Gastrocnemius medialis (tissue), 4 donors: ENCODE measurements at regions of chr5 and their contacts with region 1.

Region 1: DNA sequence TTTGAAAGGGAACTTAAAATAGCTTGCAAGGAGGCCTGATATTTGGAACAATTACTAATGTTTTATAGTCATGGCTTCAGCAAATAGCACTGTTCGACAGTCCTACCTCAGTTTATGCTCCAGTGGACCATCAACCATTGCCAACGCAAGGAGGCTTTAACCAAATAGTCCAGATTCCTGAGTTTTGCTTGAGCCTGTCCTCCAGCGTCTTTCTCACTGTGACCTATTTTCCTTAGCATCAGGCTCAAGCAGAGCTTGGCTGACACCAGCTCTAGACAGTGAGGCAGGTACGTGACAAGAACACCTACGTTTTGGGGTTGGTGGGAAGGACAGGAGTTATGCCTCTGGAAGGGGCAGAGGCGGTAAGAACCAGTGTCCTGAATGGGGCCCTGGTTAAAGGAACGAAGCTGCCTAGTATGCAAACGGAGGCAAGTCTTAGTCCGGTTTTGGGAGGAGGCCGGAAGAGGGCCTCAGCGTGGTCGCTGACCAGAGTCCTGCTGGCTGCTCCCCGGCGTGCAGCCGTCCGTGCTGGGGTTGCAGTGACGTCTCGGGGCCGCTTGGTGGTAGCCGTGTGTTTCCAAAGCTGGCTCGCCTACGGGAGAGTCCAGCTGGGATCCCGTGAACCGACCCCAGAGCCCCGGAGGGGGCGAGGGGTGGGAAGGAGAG is 998 bp upstream of the FGF18 start:
- DNase-seq: peak; percentile 37 to 63
- ATAC-seq: peak; percentile 71 to 83
- H3K4me3 ChIP-seq: peak overlapping the region; percentile 39 to 51 (median 46)
- H3K27ac ChIP-seq: no peak overlapping the region
- H3K4me1 ChIP-seq: peaks cover 20 to 21% of the 10 kb centered on the region in 2 donors
- H3K27me3 ChIP-seq: peaks cover 0 to 6% (median 0%) of the 10 kb centered on the region in 3 donors
- CTCF ChIP-seq: peak; percentile 79 to 94 (median 91)
- POLR2A ChIP-seq: no peak

Region 2: GRCh38 chr5:171162602-171163001 is 255.8 kb before region 1 on chr5:
- in situ Hi-C with region 1: no loop called
- intact Hi-C with region 1: no loop called
- DNase-seq: no peak
- ATAC-seq: no peak
- H3K4me3 ChIP-seq: no peak overlapping the region
- H3K27ac ChIP-seq: no peak overlapping the region
- H3K4me1 ChIP-seq: no peaks in the 10 kb centered on the region
- H3K27me3 ChIP-seq: no peaks in the 10 kb centered on the region
- CTCF ChIP-seq: no peak
- POLR2A ChIP-seq: no peak

Region 3: GRCh38 chr5:171858303-171858702 is 439.9 kb after region 1 on chr5:
- in situ Hi-C with region 1: no loop called
- intact Hi-C with region 1: loop called (anchors 5 kb)
- DNase-seq: no peak
- ATAC-seq: no peak
- H3K4me3 ChIP-seq: no peak overlapping the region
- H3K27ac ChIP-seq: no peak overlapping the region
- H3K4me1 ChIP-seq: no peaks in the 10 kb centered on the region
- H3K27me3 ChIP-seq: no peaks in the 10 kb centered on the region
- CTCF ChIP-seq: peak in 2 of 5 experiments; percentile 18 to 43
- POLR2A ChIP-seq: no peak

Region 4: DNA sequence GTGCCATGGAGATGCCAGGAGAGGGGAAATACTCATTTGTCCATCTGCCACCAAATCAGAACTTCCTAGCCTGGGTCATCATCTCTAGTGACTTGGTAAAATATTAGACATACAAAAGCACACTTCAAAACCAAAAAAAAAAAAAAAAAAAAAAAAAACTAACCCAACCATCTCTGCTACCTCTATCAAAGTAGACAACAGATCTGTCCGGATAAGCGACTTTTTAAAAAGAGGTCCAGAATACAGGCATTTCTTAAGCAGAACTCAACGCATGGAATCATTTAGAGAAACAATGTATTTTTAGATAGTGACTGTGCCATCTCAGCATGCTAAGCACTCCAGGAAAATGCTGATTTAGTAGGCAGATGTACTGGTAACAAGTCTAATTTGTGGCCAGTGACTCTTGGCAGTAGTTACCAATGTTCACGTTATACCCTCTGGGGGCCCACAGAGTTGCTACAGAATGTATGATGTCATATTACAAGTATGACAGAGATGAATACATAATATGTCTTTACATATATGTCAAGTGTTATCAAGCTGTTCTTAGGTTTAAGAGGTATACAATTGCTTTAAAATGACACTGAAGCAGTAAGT is 474.9 kb after region 1 on chr5:
- in situ Hi-C with region 1: loop called in 2 of 4 experiments (anchors 5 to 25 kb)
- intact Hi-C with region 1: no loop called
- DNase-seq: no peak
- ATAC-seq: no peak
- H3K4me3 ChIP-seq: no peak overlapping the region
- H3K27ac ChIP-seq: no peak overlapping the region
- H3K4me1 ChIP-seq: peaks cover 9% of the 10 kb centered on the region in 2 donors
- H3K27me3 ChIP-seq: no peaks in the 10 kb centered on the region
- CTCF ChIP-seq: no peak
- POLR2A ChIP-seq: no peak

Region 5: GRCh38 chr5:171907725-171908343 is 489.4 kb after region 1 on chr5:
- in situ Hi-C with region 1: loop called in 2 of 4 experiments (anchors 5 to 10 kb)
- intact Hi-C with region 1: loop called (anchors 2 kb)
- DNase-seq: no peak
- ATAC-seq: peak in 1 of 2 donors; percentile 68
- H3K4me3 ChIP-seq: no peak overlapping the region
- H3K27ac ChIP-seq: no peak overlapping the region
- H3K4me1 ChIP-seq: peaks cover 0 to 4% of the 10 kb centered on the region in 2 donors
- H3K27me3 ChIP-seq: no peaks in the 10 kb centered on the region
- CTCF ChIP-seq: peak; percentile 56 to 83 (median 66)
- POLR2A ChIP-seq: no peak

Region 6: GRCh38 chr5:172035039-172035438 is 616.6 kb after region 1 on chr5:
- in situ Hi-C with region 1: loop called (anchors 25 kb)
- intact Hi-C with region 1: loop called (anchors 5 kb)
- DNase-seq: no peak
- ATAC-seq: no peak
- H3K4me3 ChIP-seq: no peak overlapping the region
- H3K27ac ChIP-seq: no peak overlapping the region
- H3K4me1 ChIP-seq: peaks cover 0 to 3% of the 10 kb centered on the region in 2 donors
- H3K27me3 ChIP-seq: no peaks in the 10 kb centered on the region
- CTCF ChIP-seq: no peak
- POLR2A ChIP-seq: no peak

Region 7: DNA sequence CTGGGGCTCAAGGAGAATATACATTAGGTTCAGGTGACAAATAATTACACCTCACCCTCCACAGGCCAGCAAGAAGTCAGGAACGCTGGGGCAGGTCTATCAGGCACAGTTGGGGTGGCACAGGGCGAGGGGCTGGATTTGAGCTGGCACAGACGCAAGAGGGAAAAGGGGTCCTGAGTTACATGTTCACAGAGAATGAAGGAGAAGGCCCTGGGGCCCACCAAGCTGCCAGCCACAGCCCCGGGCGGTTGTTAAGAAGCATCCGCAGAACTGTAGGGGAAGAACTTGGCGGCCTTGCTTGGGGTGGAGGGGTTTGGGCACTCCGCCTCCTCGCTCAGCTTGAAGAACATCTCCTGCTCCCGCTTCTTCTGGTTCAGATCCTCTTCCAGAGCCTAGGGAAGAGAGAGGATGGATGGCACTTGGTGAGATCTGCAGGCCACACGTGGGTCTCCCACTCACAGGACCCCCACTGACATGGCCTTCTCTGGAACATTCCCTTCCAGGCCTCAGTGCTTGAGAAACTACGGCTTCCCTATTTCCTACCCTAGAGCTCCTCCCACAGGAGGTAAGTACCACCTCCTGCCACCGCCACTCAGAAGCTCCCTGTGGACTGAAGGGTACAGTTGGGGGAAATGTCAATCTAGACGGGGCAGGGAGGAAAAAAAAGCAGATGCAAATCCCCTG is 626.3 kb after region 1 on chr5:
- in situ Hi-C with region 1: loop called (anchors 25 kb)
- intact Hi-C with region 1: loop called (anchors 5 kb)
- DNase-seq: no peak
- ATAC-seq: no peak
- H3K4me3 ChIP-seq: no peak overlapping the region
- H3K27ac ChIP-seq: peak overlapping the region in 1 of 4 donors; percentile 22
- H3K4me1 ChIP-seq: peaks cover 0 to 3% of the 10 kb centered on the region in 2 donors
- H3K27me3 ChIP-seq: no peaks in the 10 kb centered on the region
- CTCF ChIP-seq: no peak
- POLR2A ChIP-seq: no peak